ENCODE measurements at regions of chr7 and their contacts with region 1.

Region 1: DNA sequence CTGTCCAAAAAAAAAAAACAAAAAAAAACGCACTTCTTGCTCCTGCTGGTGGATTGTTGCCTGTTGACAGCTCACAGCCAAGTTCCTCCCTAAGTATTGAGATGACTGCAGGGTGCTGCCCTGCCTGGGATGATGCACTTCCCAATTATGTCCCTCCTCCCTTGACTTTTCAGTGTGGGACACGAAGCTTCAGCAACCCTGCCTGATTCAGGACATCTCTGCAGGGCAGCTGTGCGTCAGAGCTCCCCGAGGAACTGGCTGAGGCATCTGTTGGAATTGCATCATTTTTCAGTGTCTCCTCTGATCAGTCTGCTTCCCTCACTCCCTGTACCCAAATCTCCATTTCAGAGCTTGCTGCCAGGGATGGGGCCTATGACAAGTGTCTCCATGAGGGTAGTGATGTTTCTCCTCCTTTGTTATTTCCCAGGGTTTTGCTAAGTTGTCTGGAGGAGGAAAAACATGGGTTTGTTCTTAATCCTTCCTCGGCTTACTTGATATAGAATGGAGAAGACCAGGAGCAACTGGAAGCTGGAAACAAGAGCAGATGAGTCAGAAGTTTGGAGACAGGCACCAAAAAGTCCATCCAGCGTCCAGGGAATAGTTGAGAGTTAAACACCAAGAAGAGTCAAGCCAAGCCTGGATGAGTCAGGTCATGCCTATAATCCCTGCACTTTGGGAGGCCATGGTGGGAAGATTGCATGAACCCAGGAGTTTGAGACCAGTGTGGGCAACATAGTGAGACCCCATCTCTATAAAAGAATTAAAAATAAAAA is 355.1 kb downstream of the GALNT17 start:
- DNase-seq: no peak
- ATAC-seq: no peak
- H3K4me3 Mint-ChIP-seq: no peak overlapping the region
- H3K27ac Mint-ChIP-seq: peak overlapping the region; percentile 88
- H3K4me1 Mint-ChIP-seq: peaks cover 19% of the 10 kb centered on the region
- H3K27me3 Mint-ChIP-seq: no peaks in the 10 kb centered on the region
- CTCF ChIP-seq: no peak

Region 2: GRCh38 chr7:71705217-71705616 is 218.2 kb after region 1 on chr7:
- CTCF ChIA-PET with region 1: no interaction called
- POLR2A ChIA-PET with region 1: interaction called, 10 read pairs
- DNase-seq: no peak
- ATAC-seq: no peak
- H3K4me3 Mint-ChIP-seq: no peak overlapping the region
- H3K27ac Mint-ChIP-seq: no peak overlapping the region
- H3K4me1 Mint-ChIP-seq: no peaks in the 10 kb centered on the region
- H3K27me3 Mint-ChIP-seq: no peaks in the 10 kb centered on the region
- CTCF ChIP-seq: no peak

Measured in WTC11 (cell line).